Cardiac septum (tissue), 1 donor: ENCODE measurements at regions of chr20 and their contacts with region 1.

Region 1: GRCh38 chr20:38229376-38230252 is 30.9 kb downstream of the KIAA1755 start:
- DNase-seq: peak; percentile 17

Region 2: DNA sequence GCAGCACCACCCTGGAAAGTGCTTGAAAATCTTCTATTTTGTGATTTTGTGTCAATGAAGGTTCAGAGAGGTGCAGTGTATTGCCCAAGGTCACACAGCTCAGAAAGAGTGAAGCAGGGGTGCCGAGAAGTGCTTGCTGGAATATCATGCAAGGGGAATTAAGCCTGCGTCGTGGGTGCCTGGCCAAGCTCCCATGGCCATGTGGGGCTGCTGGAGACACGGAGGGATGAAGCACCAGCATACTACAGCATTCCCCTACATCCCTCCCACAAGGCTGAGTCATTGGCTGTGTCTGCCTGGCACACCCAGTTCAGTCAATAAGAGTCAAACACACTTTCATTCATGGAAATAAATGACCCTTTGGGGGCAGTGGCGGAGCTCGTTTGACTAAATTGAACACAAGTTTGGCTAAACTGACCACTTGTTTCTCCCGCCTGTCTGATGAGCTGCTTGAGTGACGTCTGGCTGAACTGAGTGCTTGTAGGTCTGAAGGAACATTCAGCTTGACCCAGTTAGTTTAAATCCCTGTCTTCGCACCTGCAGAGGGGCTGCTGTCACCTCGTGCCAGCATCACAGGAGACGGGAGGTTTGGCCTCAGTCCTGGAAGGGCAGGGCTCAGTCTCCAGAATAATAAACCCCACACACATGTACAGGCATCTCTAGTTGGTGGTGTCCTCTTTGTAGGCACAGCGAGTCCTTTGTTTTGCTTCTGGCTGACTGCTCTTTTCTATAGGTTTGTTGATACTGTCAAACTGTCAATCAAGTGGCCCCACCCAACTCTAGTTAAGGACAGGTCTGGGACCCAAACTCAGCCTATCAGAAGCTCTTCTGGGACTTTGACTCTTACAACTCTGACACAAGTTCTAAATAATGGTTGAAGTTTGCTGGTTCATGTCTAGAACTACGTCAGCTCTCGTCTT is 56.1 kb before region 1 on chr20:
- intact Hi-C with region 1: no loop called
- DNase-seq: no peak

Region 3: GRCh38 chr20:38184101-38184500 is 45.5 kb before region 1 on chr20:
- intact Hi-C with region 1: no loop called
- DNase-seq: peak; percentile 4

Region 4: DNA sequence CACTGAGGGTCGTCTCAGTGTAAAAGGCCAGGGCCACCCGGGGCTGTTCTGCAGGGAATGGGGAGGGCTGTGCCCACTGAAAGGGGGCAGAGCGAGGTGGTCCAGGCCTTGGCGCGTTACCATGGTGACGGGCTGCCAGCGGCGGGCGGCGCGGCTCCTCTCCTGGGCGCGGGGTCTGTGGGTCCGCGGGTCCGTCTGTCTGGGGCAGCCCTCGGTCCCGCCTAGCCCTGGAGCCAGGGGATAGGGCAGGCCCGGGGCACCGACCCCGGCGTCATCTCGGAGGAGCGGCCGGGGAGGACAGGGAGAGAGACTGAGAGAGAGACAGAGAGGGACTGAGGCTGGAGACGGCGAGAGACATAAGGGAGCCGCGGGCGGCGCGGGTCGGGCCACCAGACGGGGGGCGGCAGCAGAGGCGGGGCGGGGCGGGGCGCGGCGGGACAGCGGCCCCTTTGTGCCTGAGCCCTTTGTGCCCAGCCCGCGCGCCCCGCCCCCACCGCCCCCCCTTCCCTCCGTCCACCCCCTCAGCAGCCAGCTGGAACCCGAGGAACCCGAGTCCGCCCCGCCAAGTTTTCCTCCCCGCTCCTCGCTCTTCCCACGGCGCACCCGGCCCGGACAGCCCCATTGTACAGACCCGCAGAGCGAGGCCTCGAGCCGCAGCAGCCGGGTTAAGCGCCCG is 30.9 kb after region 1 on chr20 and contains the start of gene KIAA1755:
- intact Hi-C with region 1: no loop called
- DNase-seq: peak; percentile 72
- total RNA-seq, gene KIAA1755: 7.0 TPM

Region 5: DNA sequence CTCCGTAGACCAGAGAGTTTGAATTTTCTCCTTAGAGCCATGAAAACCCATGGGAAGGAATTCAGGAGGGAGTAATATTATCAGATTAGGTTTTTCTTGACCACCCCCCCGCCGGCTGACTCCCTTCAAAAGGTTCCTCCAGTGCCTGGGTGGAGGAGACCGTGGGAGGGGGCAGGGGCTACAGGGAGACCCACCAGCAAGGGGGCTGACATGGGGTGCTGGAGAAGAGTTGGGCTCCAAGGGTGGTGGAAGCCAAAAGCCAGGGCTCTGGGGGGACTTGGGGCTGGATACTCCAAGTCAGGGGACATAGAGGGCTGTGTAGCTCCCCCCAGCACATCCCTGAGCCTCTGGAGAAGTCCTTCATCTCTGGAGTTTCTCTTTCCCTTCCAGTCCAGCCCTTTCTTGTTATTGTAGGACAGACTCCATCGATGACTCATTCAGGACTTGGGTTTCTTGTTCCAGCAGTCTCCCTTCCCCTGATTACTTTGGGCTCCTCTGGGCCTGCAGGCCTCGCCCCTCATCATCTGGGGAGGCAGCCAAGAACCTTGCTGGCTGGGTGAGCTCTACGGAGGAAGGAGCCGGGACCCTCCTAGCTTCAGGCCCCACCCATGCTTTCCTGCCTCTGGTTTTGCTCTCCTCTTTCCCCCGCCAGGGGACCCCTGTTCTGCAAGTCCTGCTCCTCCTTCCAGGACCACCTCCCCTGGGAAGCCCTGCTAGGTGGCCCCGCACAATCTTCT is 41.4 kb after region 1 on chr20:
- intact Hi-C with region 1: no loop called
- DNase-seq: peak; percentile 83

Region 6: DNA sequence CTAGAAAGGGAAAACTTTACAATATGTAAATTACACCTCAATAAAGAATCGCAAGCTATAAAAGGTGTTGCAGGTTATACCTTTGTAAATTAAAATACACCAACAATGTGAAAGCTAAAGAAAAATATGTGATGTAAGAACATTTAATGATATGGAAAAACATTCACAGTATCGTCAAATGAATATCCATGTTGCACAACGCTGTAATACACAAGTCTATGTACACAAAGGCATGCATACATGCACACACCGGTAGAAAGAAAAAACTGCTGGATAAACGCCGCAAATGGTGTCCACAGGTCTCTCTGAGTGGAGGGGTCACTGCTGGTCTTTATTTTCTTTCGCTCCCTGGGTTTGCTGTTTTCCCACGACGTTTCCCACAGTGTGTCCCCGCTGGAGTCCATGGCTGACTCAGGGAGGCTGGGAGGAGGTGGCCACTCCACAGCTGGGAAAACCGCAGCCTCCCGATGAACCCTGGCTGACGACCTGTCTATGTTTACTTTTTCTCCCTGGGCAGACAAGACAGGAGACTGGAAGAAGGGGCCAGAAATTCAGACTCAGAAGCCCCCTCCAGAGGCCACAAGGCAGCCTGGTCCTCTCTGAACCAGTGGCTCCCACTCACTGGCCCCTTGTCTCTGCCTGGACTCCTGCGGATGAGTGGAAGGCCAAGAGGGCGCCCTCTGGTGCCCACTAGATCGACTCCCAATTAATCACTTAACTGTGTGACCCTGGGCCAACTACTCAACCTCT is 61.4 kb after region 1 on chr20:
- intact Hi-C with region 1: loop called (anchors 5 kb)
- DNase-seq: no peak

Region 7: GRCh38 chr20:38406476-38406875 is 176.9 kb after region 1 on chr20:
- intact Hi-C with region 1: loop called (anchors 5 kb)
- DNase-seq: no peak